Activated CD4-positive, alpha-beta T cell treated with anti-CD3 and anti-CD28 coated beads for 36 hours (primary cell): ENCODE measurements at regions of chr1 and their contacts with region 1.

Region 1: DNA sequence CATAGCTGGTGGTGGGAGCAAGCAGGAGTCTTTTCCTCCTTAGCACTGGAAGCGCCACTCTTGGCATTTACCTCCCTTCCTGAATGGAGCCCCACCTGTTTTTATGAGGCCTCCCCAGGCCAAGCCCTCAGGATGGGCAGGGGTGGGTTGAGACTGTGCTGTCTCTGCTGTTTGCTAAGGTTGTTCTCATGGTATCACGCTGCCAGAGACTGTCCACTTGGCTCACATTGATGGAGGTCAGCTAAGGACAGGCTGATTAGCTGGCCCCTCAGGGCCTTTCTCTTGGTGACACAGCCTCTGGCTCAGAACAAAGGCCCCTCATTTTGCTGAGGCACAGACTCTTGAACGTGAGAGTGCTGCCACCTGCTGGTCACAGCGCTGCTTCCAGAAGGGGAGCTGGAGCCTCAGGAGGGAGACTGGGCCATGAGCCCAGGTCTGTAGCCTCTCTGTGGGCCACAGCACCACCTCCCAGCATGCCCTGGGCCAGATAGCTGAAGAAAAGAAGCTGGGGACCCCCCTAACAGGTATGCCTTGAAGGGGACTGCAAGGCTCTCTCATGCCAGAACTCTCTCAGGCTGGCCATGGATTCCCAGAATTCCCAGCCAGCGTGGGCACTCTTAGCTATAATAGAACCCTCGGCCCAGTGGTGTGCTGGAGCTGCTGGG is 85.6 kb downstream of the CD58 start:
- DNase-seq: peak; percentile 94
- ATAC-seq: peak; percentile 93
- H3K4me3 Mint-ChIP-seq: no peak overlapping the region
- H3K27ac Mint-ChIP-seq: no peak overlapping the region
- H3K4me1 Mint-ChIP-seq: peaks cover 5% of the 10 kb centered on the region
- H3K27me3 Mint-ChIP-seq: no peaks in the 10 kb centered on the region

Region 2: GRCh38 chr1:116168277-116169097 is 316.7 kb before region 1 on chr1:
- CTCF ChIA-PET with region 1: interaction called, 13 read pairs
- POLR2A ChIA-PET with region 1: no interaction called
- intact Hi-C with region 1: loop called in 1 of 2 experiments (anchors 1 kb)
- DNase-seq: peak; percentile 92
- ATAC-seq: peak; percentile 99
- H3K4me3 Mint-ChIP-seq: peak overlapping the region; percentile 60
- H3K27ac Mint-ChIP-seq: peak overlapping the region; percentile 79
- H3K4me1 Mint-ChIP-seq: peaks cover 10% of the 10 kb centered on the region
- H3K27me3 Mint-ChIP-seq: no peaks in the 10 kb centered on the region

Region 3: GRCh38 chr1:116360429-116361173 is 124.6 kb before region 1 on chr1:
- CTCF ChIA-PET with region 1: interaction called, 6 read pairs
- POLR2A ChIA-PET with region 1: no interaction called
- intact Hi-C with region 1: loop called (anchors 1 kb)
- DNase-seq: no peak
- ATAC-seq: no peak
- H3K4me3 Mint-ChIP-seq: no peak overlapping the region
- H3K27ac Mint-ChIP-seq: no peak overlapping the region
- H3K4me1 Mint-ChIP-seq: peaks cover 20% of the 10 kb centered on the region
- H3K27me3 Mint-ChIP-seq: no peaks in the 10 kb centered on the region

Region 4: DNA sequence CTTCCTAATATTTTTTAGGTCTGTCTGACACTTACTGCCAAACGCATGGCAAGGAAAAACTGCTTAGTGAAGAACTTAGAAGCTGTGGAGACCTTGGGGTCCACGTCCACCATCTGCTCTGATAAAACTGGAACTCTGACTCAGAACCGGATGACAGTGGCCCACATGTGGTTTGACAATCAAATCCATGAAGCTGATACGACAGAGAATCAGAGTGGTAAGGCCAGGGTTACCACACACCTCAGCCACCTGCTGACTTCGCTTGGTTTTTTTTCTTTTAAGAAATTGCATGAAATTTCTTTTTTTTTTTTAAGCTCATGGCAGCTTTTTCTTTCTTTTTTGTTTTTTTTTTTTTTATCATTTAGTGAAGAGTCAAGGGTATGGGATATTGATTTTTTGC is 95.0 kb before region 1 on chr1:
- CTCF ChIA-PET with region 1: interaction called, 11 read pairs
- POLR2A ChIA-PET with region 1: no interaction called
- intact Hi-C with region 1: no loop called
- DNase-seq: peak; percentile 71
- ATAC-seq: peak; percentile 92
- H3K4me3 Mint-ChIP-seq: no peak overlapping the region
- H3K27ac Mint-ChIP-seq: no peak overlapping the region
- H3K4me1 Mint-ChIP-seq: peaks cover 59% of the 10 kb centered on the region
- H3K27me3 Mint-ChIP-seq: no peaks in the 10 kb centered on the region

Region 5: GRCh38 chr1:116408803-116409720 is 76.1 kb before region 1 on chr1:
- CTCF ChIA-PET with region 1: no interaction called
- POLR2A ChIA-PET with region 1: no interaction called
- intact Hi-C with region 1: no loop called
- DNase-seq: no peak
- ATAC-seq: no peak
- H3K4me3 Mint-ChIP-seq: no peak overlapping the region
- H3K27ac Mint-ChIP-seq: peak overlapping the region; percentile 21
- H3K4me1 Mint-ChIP-seq: peaks cover 27% of the 10 kb centered on the region
- H3K27me3 Mint-ChIP-seq: no peaks in the 10 kb centered on the region

Region 6: DNA sequence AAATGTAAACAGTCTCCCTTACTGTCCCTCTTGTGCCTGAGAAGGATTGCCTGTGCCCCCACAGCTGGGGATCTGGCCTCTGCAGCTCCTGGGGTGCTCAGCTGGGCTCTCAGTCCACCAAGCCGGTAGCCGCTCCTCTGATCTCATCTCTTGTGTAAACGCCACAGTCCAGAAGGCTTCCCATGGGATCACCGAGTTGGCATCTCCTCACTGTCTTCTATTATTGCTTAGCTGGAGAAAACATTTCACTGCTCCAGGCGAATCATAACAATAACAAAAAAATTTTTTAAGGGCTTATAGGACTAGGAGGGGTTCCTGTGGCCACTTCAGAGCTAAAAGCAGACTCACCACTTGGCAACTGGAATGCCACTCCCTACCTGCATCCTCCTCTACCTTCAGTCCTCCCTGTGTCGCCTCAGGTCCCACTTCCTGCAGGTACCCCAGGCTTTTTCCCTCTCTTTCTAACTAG is 36.4 kb before region 1 on chr1:
- CTCF ChIA-PET with region 1: interaction called, 17 read pairs
- POLR2A ChIA-PET with region 1: no interaction called
- intact Hi-C with region 1: no loop called
- DNase-seq: no peak
- ATAC-seq: no peak
- H3K4me3 Mint-ChIP-seq: no peak overlapping the region
- H3K27ac Mint-ChIP-seq: no peak overlapping the region
- H3K4me1 Mint-ChIP-seq: no peaks in the 10 kb centered on the region
- H3K27me3 Mint-ChIP-seq: peaks cover 2% of the 10 kb centered on the region

Region 7: DNA sequence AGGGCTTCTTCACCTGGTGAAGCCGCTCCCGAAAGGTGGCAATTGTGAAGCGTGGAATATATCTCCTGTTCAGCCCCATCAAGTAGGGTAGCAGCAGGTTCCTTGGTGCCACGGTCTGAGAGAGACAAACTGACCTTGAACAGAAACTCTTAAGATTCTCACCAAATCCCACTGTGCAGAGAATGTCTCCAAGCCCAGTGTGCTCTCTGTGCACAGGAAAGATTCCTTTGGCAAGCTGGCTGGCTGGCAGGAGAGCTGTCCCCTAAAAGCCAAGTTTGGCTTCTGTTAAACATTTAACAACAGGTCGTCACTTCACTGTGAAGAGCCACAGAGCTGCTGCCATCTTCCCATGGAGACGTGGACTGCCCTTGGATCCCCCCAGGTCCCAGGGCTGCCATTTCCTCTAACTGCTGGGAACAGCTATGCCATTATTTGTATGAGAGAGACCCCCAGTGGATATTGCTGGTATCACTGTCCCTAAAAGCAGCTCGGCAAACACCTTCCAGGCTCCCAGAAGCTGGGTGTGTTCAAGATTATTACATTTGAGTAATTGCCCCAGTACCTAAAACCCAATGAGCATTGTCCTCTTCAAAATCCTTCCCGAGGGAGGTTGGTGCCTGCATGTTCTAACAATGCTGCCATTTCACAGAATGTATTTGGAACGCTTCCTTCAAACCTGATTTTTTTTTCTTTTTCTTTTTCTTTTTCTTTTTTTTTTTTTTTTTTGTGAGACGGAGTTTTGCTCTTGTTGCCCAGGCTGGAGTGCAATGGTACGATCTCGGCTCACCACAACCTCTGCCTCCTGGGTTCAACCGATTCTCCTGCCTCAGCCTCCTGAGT is 13.8 kb after region 1 on chr1:
- CTCF ChIA-PET with region 1: interaction called, 153 read pairs
- POLR2A ChIA-PET with region 1: no interaction called
- intact Hi-C with region 1: no loop called
- DNase-seq: peak; percentile 61
- ATAC-seq: peak; percentile 73
- H3K4me3 Mint-ChIP-seq: no peak overlapping the region
- H3K27ac Mint-ChIP-seq: no peak overlapping the region
- H3K4me1 Mint-ChIP-seq: peaks cover 24% of the 10 kb centered on the region
- H3K27me3 Mint-ChIP-seq: no peaks in the 10 kb centered on the region